AG04450 (cell line): ENCODE measurements at regions of chr5 and their contacts with region 1.

Region 1: GRCh38 chr5:91419571-91420537 is 36.7 kb upstream of the ARRDC3 start:
- DNase-seq: peak; percentile 26
- H3K4me3 ChIP-seq: no peak overlapping the region
- H3K27ac ChIP-seq: no peak overlapping the region
- H3K27me3 ChIP-seq: no peaks in the 10 kb centered on the region
- CTCF ChIP-seq: peak; percentile 66

Region 2: DNA sequence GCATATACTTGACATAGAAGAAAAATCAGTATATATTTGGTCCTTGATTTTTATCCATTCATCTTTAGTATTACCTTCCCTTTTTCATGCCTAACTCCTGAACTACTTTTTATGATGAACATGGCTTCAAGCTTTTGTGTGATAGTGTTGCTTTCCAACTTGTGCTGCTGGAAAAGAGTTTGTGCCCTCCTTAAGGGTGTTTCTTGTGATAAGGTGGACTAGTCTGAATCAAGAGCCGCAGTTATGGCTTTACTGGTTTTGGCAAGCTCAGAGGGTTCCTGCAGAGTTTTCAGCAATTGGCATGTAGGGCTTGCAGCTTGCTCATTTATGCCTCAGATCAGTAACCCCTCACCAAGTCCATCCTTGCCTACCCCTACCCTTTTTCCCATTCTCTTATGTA is 924.7 kb before region 1 on chr5:
- CTCF ChIA-PET with region 1: no interaction called
- POLR2A ChIA-PET with region 1: no interaction called
- DNase-seq: no peak
- H3K4me3 ChIP-seq: no peak overlapping the region
- H3K27ac ChIP-seq: no peak overlapping the region
- H3K27me3 ChIP-seq: no peaks in the 10 kb centered on the region
- CTCF ChIP-seq: no peak

Region 3: DNA sequence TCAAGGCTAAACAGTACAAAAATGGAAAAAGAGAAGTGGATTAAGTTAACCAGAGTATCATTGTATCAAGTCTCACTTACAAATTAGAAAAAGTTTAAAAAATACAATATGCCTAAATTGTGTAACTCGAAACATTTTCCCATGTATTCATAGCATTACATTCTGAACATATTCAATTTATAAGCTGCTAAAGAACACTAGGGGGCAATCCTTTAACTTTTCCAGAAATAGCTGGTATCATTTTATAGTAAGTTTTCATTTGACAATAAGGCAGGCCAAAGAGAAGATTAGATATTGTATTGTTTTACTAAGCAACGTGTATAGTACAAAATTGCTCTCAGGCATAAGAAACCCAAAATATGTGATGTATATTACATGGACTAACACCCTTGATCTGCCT is 626.7 kb before region 1 on chr5:
- CTCF ChIA-PET with region 1: interaction called, 11 read pairs
- POLR2A ChIA-PET with region 1: no interaction called
- DNase-seq: no peak
- H3K4me3 ChIP-seq: no peak overlapping the region
- H3K27ac ChIP-seq: no peak overlapping the region
- H3K27me3 ChIP-seq: no peaks in the 10 kb centered on the region
- CTCF ChIP-seq: peak; percentile 43

Region 4: DNA sequence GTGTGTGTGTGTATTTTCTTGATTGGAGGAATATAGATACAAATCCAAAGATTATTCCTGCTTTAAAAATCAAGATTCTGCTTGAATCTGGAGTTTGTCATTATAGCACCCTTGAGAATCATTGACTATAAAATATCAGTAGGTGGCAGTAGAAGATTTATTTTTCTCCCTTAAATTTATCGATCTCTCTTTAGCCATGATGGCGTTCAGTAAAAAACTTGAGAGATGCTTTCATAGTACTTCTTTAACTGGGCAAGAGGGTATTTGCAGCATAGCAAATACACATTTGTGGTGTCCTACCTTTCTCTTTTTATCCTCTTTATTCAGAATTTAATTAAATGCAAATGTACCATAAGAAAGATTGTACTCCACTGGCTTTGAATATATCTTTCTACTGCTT is 553.5 kb before region 1 on chr5:
- CTCF ChIA-PET with region 1: interaction called, 218 read pairs
- POLR2A ChIA-PET with region 1: no interaction called
- DNase-seq: no peak
- H3K4me3 ChIP-seq: no peak overlapping the region
- H3K27ac ChIP-seq: no peak overlapping the region
- H3K27me3 ChIP-seq: no peaks in the 10 kb centered on the region
- CTCF ChIP-seq: peak; percentile 45

Region 5: GRCh38 chr5:90878549-90879196 is 541.2 kb before region 1 on chr5:
- CTCF ChIA-PET with region 1: interaction called, 23 read pairs
- POLR2A ChIA-PET with region 1: no interaction called
- DNase-seq: no peak
- H3K4me3 ChIP-seq: no peak overlapping the region
- H3K27ac ChIP-seq: no peak overlapping the region
- H3K27me3 ChIP-seq: no peaks in the 10 kb centered on the region
- CTCF ChIP-seq: no peak

Region 6: DNA sequence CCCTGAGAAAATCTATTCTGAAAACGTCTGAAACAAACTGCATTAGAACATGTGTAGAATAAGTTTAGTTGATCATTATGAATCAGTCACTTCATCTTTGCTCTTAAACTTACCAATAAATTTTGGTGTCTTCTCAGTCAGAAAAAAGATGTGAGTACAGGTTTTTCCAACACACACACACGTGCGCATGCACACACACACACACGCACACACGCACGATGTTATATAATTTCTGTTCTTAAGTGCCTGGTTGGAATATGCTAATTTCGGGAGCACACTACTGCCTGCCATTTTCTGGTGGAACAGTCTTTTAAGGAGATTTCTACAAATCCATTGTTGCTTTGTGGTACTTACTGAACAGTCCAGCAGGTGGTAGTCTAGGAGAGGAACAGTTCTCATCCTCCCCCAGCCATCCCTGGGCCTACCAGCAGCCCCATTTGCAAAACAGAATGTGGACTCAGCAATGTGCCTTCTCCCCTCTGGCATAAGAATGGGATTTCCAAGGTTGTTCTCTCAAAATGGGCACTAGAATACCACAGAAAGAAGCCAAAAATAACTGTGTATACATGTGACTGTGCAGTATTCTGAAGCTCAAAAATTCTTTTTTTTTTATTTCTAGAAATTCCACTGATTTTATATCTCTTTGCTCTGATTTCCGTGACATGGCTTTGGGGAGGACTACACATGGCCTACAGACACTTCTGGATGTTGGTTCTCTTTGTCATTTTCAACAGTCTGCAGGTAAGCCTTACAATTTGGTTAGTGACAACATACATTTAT is 318.1 kb before region 1 on chr5:
- CTCF ChIA-PET with region 1: interaction called, 59 read pairs
- POLR2A ChIA-PET with region 1: no interaction called
- DNase-seq: peak; percentile 73
- H3K4me3 ChIP-seq: no peak overlapping the region
- H3K27ac ChIP-seq: no peak overlapping the region
- H3K27me3 ChIP-seq: no peaks in the 10 kb centered on the region
- CTCF ChIP-seq: peak; percentile 83

Region 7: GRCh38 chr5:91403438-91403837 is 16.4 kb before region 1 on chr5:
- CTCF ChIA-PET with region 1: interaction called, 38 read pairs
- POLR2A ChIA-PET with region 1: no interaction called
- DNase-seq: peak; percentile 36
- H3K4me3 ChIP-seq: no peak overlapping the region
- H3K27ac ChIP-seq: no peak overlapping the region
- H3K27me3 ChIP-seq: no peaks in the 10 kb centered on the region
- CTCF ChIP-seq: no peak

Region 8: GRCh38 chr5:91434348-91434747 is 14.5 kb after region 1 on chr5:
- CTCF ChIA-PET with region 1: interaction called, 17 read pairs
- POLR2A ChIA-PET with region 1: no interaction called
- DNase-seq: no peak
- H3K4me3 ChIP-seq: no peak overlapping the region
- H3K27ac ChIP-seq: no peak overlapping the region
- H3K27me3 ChIP-seq: no peaks in the 10 kb centered on the region
- CTCF ChIP-seq: no peak